ENCODE measurements at regions of chr16 and their contacts with region 1.

Region 1: DNA sequence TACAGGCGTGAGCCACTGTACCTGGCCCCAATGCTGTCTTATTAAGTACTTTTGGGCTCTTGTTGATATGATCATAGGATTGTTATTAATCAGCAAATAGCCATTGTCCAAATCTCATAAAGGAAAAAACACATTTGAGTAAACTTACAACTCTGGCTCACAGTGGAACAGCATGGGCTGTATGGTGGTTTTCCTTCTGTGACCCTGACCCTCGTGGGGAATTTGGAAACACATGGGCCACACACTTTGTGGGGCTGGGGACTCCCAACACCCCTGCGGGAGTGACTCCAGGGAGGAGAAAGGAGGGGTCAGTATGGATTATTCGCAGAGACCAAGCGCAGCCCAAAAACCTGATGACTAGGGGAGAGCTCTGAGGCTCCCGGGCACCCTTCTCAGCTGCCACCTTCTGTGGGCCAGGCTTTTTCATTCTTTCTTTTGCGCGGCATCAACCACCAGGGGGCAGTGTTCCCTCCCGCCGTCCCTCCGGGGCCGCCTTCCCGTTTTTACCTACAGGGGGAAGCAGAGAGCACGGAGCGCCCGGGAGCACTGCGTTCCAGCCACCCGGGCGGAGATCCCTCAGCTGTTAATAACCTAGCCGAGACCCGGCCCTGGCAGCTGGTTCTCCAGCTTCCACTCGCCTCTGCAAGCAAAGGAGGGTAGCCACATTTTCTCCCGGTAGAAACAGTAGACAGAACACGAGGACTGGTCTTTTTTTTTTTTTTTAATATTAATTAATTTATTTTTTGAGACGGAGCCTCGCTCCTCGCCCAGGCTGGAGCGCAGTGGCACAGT is 9.7 kb downstream of the TSNAXIP1 start:
- DNase-seq: peak; percentile 94
- H3K4me3 ChIP-seq: no peak overlapping the region; a peak in 1 of 4 replicates
- H3K27ac ChIP-seq: no peak overlapping the region
- H3K4me1 ChIP-seq: no peaks in the 10 kb centered on the region; a peak in 1 of 4 replicates
- H3K27me3 ChIP-seq: no peaks in the 10 kb centered on the region
- CTCF ChIP-seq: peak; percentile 99
- EP300 ChIP-seq: no peak
- RAD21 ChIP-seq: peak; percentile 75

Region 2: GRCh38 chr16:67470359-67470758 is 346.1 kb before region 1 on chr16:
- CTCF ChIA-PET with region 1: no interaction called
- POLR2A ChIA-PET with region 1: no interaction called
- DNase-seq: peak; percentile 61
- H3K4me3 ChIP-seq: no peak overlapping the region
- H3K27ac ChIP-seq: peak overlapping the region in 1 of 2 experiments; percentile 53; a peak in 2 of 4 replicates
- H3K4me1 ChIP-seq: peaks cover 3 to 13% of the 10 kb centered on the region in 2 experiments; a peak in 1 of 4 replicates
- H3K27me3 ChIP-seq: no peaks in the 10 kb centered on the region
- CTCF ChIP-seq: no peak
- EP300 ChIP-seq: no peak
- RAD21 ChIP-seq: no peak

Region 3: GRCh38 chr16:67667817-67668494 is 148.5 kb before region 1 on chr16:
- CTCF ChIA-PET with region 1: interaction called, 40 read pairs
- POLR2A ChIA-PET with region 1: no interaction called
- DNase-seq: peak; percentile 95
- H3K4me3 ChIP-seq: peak overlapping the region; percentile 19 to 67; a peak in 2 of 4 replicates
- H3K27ac ChIP-seq: peak overlapping the region; percentile 56 to 86; a peak in 3 of 4 replicates
- H3K4me1 ChIP-seq: peaks cover 12 to 31% of the 10 kb centered on the region in 2 experiments; a peak in 2 of 4 replicates
- H3K27me3 ChIP-seq: no peaks in the 10 kb centered on the region
- CTCF ChIP-seq: peak; percentile 82
- EP300 ChIP-seq: no peak
- RAD21 ChIP-seq: peak; percentile 74

Region 4: GRCh38 chr16:67770346-67770991 is 46.0 kb before region 1 on chr16:
- CTCF ChIA-PET with region 1: interaction called, 10 read pairs
- POLR2A ChIA-PET with region 1: no interaction called
- DNase-seq: no peak
- H3K4me3 ChIP-seq: no peak overlapping the region
- H3K27ac ChIP-seq: no peak overlapping the region
- H3K4me1 ChIP-seq: peaks cover 3 to 10% of the 10 kb centered on the region in 2 experiments; a peak in 1 of 4 replicates
- H3K27me3 ChIP-seq: no peaks in the 10 kb centered on the region
- CTCF ChIP-seq: no peak
- EP300 ChIP-seq: no peak
- RAD21 ChIP-seq: no peak

Region 5: DNA sequence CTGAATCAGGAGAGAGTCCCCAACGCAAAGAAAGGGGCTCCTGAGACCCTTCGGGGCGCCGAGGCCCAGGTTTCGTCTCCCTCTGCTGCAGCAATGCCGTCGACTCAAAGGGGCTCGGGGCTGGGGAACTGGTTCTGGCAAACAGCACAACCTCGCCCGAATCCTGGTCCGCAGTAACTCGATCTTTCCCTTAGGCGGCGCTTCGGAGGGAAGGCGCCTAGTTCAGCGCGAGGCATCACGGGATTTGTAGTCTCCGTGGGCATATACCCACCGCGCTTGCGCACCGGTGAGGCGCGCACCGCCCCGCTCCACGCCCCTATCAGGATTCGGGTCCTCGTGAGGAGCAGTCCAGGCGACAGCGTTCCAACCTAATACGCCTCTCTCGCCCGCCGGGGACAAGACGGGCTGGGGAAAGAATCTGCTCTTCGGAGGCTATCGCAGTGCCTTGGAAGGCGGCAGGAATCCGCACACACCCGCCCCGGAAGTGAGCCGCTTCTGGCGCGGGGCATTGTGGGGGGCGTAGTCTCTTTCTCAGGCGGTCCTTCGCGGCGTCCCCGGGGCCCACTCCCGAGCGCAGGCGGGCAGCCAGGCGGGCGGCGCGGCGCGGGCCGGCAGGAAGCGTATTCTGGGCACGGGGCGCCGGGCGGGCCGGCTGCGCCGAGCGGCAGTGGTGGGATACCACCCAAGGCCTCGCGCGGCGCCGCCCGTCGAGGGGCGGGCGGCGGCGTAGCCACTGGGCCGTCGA is 25.5 kb after region 1 on chr16 and contains the start of gene THAP11:
- CTCF ChIA-PET with region 1: interaction called, 66 read pairs
- POLR2A ChIA-PET with region 1: interaction called, 3 read pairs
- DNase-seq: peak; percentile 94
- H3K4me3 ChIP-seq: peak within 1 kb of the TSS; percentile 77 to 97
- H3K27ac ChIP-seq: peak within 1 kb of the TSS; percentile 98 to 99
- H3K4me1 ChIP-seq: peaks cover 26 to 36% of the 10 kb centered on the region in 2 experiments
- H3K27me3 ChIP-seq: no peaks in the 10 kb centered on the region
- CTCF ChIP-seq: peak; percentile 64
- EP300 ChIP-seq: no peak
- RAD21 ChIP-seq: peak; percentile 23
- polyA plus RNA-seq, gene THAP11: 32.3 and 34.8 TPM in 2 replicates

Region 6: DNA sequence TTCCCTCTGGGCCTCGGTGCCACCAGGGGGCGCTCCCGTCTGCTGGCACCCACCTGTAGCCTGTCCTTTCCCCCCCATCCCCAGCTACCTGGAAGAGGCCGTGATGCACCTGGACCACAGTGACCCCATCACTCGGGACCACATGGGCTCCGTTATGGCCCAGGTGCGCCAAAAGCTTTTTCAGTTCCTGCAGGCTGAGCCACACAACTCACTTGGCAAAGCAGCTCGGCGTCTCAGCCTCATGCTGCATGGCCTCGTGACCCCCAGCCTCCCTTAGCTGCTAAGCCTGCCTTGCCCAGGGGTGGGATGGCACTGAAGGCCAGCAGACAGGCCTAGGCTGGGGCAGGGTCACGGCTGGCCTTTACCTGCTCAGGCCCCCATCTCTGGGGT is 67.4 kb after region 1 on chr16:
- CTCF ChIA-PET with region 1: interaction called, 22 read pairs
- POLR2A ChIA-PET with region 1: no interaction called
- DNase-seq: peak; percentile 90
- H3K4me3 ChIP-seq: no peak overlapping the region
- H3K27ac ChIP-seq: no peak overlapping the region
- H3K4me1 ChIP-seq: peaks cover 7 to 13% of the 10 kb centered on the region in 2 experiments; a peak in 2 of 4 replicates
- H3K27me3 ChIP-seq: no peaks in the 10 kb centered on the region
- CTCF ChIP-seq: peak; percentile 91
- EP300 ChIP-seq: no peak
- RAD21 ChIP-seq: peak; percentile 71

Region 7: DNA sequence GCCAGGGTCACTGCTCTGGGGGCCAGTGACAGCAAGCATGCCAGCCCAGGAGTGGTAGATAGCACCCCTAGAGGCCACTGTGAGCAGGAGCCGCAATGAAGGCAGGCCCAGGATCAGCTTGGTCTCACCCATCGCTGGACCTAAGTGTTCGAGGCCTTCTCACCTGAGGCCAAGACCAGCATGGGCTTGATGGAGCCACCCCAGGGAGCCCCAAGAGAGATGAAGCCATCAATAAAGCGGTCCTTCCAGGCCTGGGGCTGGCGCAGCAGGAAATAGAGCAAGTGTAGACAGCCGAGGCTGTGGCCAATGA is 125.7 kb after region 1 on chr16:
- CTCF ChIA-PET with region 1: interaction called, 33 read pairs
- POLR2A ChIA-PET with region 1: no interaction called
- DNase-seq: peak; percentile 85
- H3K4me3 ChIP-seq: peak overlapping the region in 1 of 2 experiments; percentile 16; a peak in 1 of 4 replicates
- H3K27ac ChIP-seq: no peak overlapping the region; a peak in 1 of 4 replicates
- H3K4me1 ChIP-seq: peaks cover 4 to 25% of the 10 kb centered on the region in 2 experiments; a peak in 2 of 4 replicates
- H3K27me3 ChIP-seq: no peaks in the 10 kb centered on the region
- CTCF ChIP-seq: peak; percentile 73
- EP300 ChIP-seq: no peak
- RAD21 ChIP-seq: peak; percentile 63

Region 8: DNA sequence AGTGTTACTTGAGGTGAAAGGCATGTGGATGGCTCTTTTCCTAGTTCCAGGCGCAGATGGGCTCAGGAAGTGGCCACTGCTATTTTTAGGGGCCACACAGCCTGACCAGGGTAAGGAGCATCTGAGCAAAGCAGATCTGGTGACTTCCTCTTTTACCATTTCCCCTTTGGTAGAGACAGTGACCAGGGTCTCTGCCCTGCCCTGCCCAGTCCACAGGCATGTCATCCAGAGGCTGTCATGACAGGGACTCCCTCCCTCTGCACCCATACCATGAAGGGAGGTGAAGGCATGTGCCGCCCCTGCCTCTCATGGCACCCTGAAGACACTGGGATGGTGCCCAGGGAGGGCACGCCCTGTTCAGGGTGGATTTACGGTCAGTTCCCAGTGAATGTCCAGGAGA is 431.0 kb after region 1 on chr16:
- CTCF ChIA-PET with region 1: no interaction called
- POLR2A ChIA-PET with region 1: no interaction called
- DNase-seq: no peak
- H3K4me3 ChIP-seq: no peak overlapping the region
- H3K27ac ChIP-seq: no peak overlapping the region
- H3K4me1 ChIP-seq: peaks cover 7 to 15% of the 10 kb centered on the region in 2 experiments; a peak in 2 of 4 replicates
- H3K27me3 ChIP-seq: no peaks in the 10 kb centered on the region
- CTCF ChIP-seq: no peak
- EP300 ChIP-seq: no peak
- RAD21 ChIP-seq: no peak

Measured in SK-N-SH (cell line).